Activated CD4-positive, alpha-beta T cell treated with anti-CD3 and anti-CD28 coated beads, Interleukin-2, amount 10 ng/mL, durations not matched to agents 24 days and 14 days (primary cell): ENCODE measurements at regions of chr3 and their contacts with region 1.

Region 1: GRCh38 chr3:32302601-32303398 is 64.3 kb downstream of the CMTM8 start:
- DNase-seq: no peak
- H3K4me3 Mint-ChIP-seq: peak overlapping the region; percentile 64
- H3K27ac Mint-ChIP-seq: peak overlapping the region; percentile 82
- H3K4me1 Mint-ChIP-seq: peaks cover 62% of the 10 kb centered on the region
- H3K27me3 Mint-ChIP-seq: no peaks in the 10 kb centered on the region

Region 2: DNA sequence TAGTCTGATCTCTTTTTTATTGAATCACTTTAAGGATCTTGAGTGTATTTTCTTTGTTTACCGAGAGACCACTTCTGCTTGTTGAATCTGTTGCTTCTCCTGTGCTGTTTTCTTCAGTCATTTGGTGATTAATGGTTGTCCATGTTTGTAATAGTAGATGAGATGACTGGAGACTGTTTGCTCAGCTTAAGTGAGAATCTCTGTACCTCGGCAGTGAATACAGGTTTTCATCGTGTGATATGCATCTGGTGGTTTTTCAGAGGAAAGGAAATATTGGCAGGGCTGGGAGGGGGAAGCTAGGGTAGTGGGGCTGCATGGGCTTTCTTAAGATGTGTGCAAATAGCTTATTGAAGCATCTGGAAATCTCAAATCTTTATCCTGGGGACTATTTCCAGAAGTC is 45.2 kb before region 1 on chr3:
- intact Hi-C with region 1: no loop called
- DNase-seq: peak; percentile 63
- H3K4me3 Mint-ChIP-seq: no peak overlapping the region
- H3K27ac Mint-ChIP-seq: no peak overlapping the region
- H3K4me1 Mint-ChIP-seq: peaks cover 11% of the 10 kb centered on the region
- H3K27me3 Mint-ChIP-seq: no peaks in the 10 kb centered on the region

Region 3: GRCh38 chr3:32313723-32314473 is 11.1 kb after region 1 on chr3:
- intact Hi-C with region 1: loop called (anchors 1 kb)
- DNase-seq: peak; percentile 76
- H3K4me3 Mint-ChIP-seq: peak overlapping the region; percentile 52
- H3K27ac Mint-ChIP-seq: peak overlapping the region; percentile 73
- H3K4me1 Mint-ChIP-seq: peaks cover 35% of the 10 kb centered on the region
- H3K27me3 Mint-ChIP-seq: no peaks in the 10 kb centered on the region

Region 4: GRCh38 chr3:32334675-32335074 is 31.9 kb after region 1 on chr3:
- intact Hi-C with region 1: no loop called
- DNase-seq: peak; percentile 89
- H3K4me3 Mint-ChIP-seq: peak overlapping the region; percentile 57
- H3K27ac Mint-ChIP-seq: peak overlapping the region; percentile 31
- H3K4me1 Mint-ChIP-seq: peaks cover 42% of the 10 kb centered on the region
- H3K27me3 Mint-ChIP-seq: no peaks in the 10 kb centered on the region